MCF 10A (cell line): ENCODE measurements at regions of chr22 and their contacts with region 1.

Region 1: GRCh38 chr22:21001560-21002325 is at the start of gene THAP7:
- DNase-seq: peak; percentile 94
- H3K4me3 Mint-ChIP-seq: peak within 1 kb of the TSS; percentile 87
- H3K27ac Mint-ChIP-seq: peak within 1 kb of the TSS; percentile 98
- H3K4me1 Mint-ChIP-seq: peaks cover 10% of the 10 kb centered on the region
- H3K27me3 Mint-ChIP-seq: no peaks in the 10 kb centered on the region
- CTCF ChIP-seq: no peak
- total RNA-seq, gene THAP7: 20.6 and 24.9 TPM in 2 replicates

Region 2: GRCh38 chr22:20965104-20965887 is 36.4 kb before region 1 on chr22:
- CTCF ChIA-PET with region 1: no interaction called
- POLR2A ChIA-PET with region 1: no interaction called
- intact Hi-C with region 1: no loop called
- DNase-seq: no peak
- H3K4me3 Mint-ChIP-seq: no peak overlapping the region
- H3K27ac Mint-ChIP-seq: no peak overlapping the region
- H3K4me1 Mint-ChIP-seq: no peaks in the 10 kb centered on the region
- H3K27me3 Mint-ChIP-seq: no peaks in the 10 kb centered on the region
- CTCF ChIP-seq: no peak

Region 3: GRCh38 chr22:20981787-20982562 is 19.8 kb before region 1 on chr22 and contains the start of gene LZTR1:
- CTCF ChIA-PET with region 1: interaction called, 5 read pairs
- POLR2A ChIA-PET with region 1: interaction called, 24 read pairs
- intact Hi-C with region 1: no loop called
- DNase-seq: peak; percentile 79
- H3K4me3 Mint-ChIP-seq: peak within 1 kb of the TSS; percentile 88
- H3K27ac Mint-ChIP-seq: peak within 1 kb of the TSS; percentile 37
- H3K4me1 Mint-ChIP-seq: peaks cover 8% of the 10 kb centered on the region
- H3K27me3 Mint-ChIP-seq: no peaks in the 10 kb centered on the region
- CTCF ChIP-seq: peak; percentile 29
- total RNA-seq, gene LZTR1: 49.2 and 57.3 TPM in 2 replicates

Region 4: GRCh38 chr22:21014202-21014725 is 12.5 kb after region 1 on chr22:
- CTCF ChIA-PET with region 1: interaction called, 3 read pairs
- POLR2A ChIA-PET with region 1: interaction called, 21 read pairs
- intact Hi-C with region 1: no loop called
- DNase-seq: peak; percentile 35
- H3K4me3 Mint-ChIP-seq: peak overlapping the region; percentile 80
- H3K27ac Mint-ChIP-seq: no peak overlapping the region
- H3K4me1 Mint-ChIP-seq: peaks cover 22% of the 10 kb centered on the region
- H3K27me3 Mint-ChIP-seq: no peaks in the 10 kb centered on the region
- CTCF ChIP-seq: no peak

Region 5: DNA sequence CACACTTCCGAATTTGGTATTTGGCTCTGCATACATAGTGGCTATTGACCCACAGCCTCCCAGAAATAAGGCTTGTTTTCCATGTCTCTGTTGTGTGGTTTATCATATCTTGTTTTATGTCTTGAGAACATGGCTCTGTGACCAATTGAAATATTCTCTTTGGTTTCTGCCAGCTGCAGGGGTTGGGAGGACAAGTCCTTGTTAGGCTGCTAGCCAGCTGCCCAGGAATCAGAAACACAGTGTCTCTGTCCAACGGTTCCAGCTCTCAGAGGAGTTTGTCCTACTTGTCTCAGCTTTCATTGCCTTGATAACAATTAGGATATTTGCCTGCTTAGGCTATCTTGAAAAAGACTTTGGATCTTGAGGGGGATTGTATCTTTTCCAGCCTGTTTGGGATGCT is 36.7 kb after region 1 on chr22:
- CTCF ChIA-PET with region 1: interaction called, 4 read pairs
- POLR2A ChIA-PET with region 1: interaction called, 26 read pairs
- intact Hi-C with region 1: loop called (anchors 1 kb)
- DNase-seq: no peak
- H3K4me3 Mint-ChIP-seq: no peak overlapping the region
- H3K27ac Mint-ChIP-seq: peak overlapping the region; percentile 85
- H3K4me1 Mint-ChIP-seq: peaks cover 18% of the 10 kb centered on the region
- H3K27me3 Mint-ChIP-seq: no peaks in the 10 kb centered on the region
- CTCF ChIP-seq: no peak

Region 6: DNA sequence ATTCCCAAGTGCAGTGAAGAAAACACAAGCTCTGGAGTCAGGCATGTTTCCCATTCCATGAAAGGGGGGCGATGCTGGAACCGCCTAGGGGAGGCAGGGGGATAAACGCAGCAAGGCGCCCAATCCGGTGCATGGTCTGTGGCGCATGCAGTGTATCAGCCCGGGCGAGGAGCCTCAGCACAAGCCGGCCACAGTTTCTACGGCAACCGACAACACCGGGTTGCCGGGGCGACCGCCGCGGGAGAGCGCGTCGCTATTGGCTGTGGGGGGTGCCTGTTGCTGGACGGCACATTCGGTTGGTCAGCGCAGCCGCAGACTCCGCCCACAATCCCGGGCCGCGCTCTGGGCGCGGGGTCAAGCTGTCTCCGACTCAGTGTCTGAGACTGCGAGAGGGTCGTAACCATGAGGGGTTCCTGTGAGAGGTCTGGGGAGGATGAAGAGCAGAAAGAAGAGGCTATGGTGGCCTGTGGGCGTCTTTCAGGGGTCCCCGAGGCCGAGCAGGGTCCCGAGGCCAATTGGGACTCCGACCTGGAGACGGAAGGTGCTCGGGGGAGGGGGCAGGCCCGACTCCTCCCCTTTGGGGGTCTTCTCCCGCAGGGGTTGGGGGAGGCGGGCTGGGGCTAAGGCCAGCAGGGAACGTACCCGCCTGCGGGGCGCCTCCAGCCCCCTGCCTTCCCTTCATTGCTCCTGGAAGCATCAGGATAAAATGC is 44.0 kb after region 1 on chr22 and contains the start of gene LRRC74B:
- CTCF ChIA-PET with region 1: interaction called, 5 read pairs
- POLR2A ChIA-PET with region 1: interaction called, 26 read pairs
- intact Hi-C with region 1: no loop called
- DNase-seq: peak; percentile 82
- H3K4me3 Mint-ChIP-seq: peak within 1 kb of the TSS; percentile 74
- H3K27ac Mint-ChIP-seq: peak within 1 kb of the TSS; percentile 76
- H3K4me1 Mint-ChIP-seq: peaks cover 30% of the 10 kb centered on the region
- H3K27me3 Mint-ChIP-seq: no peaks in the 10 kb centered on the region
- CTCF ChIP-seq: no peak
- total RNA-seq, gene LRRC74B: not detected in 2 replicates

Region 7: GRCh38 chr22:21102659-21103267 is 101.0 kb after region 1 on chr22:
- CTCF ChIA-PET with region 1: no interaction called
- POLR2A ChIA-PET with region 1: interaction called, 12 read pairs
- intact Hi-C with region 1: no loop called
- DNase-seq: peak; percentile 56
- H3K4me3 Mint-ChIP-seq: no peak overlapping the region
- H3K27ac Mint-ChIP-seq: no peak overlapping the region
- H3K4me1 Mint-ChIP-seq: peaks cover 30% of the 10 kb centered on the region
- H3K27me3 Mint-ChIP-seq: no peaks in the 10 kb centered on the region
- CTCF ChIP-seq: peak; percentile 62